ENCODE measurements at regions of chr17 and their contacts with region 1.

Region 1: GRCh38 chr17:27245230-27245696 is 48.7 kb upstream of the WSB1 start:
- DNase-seq: peak; percentile 56
- H3K4me3 ChIP-seq: no peak overlapping the region
- H3K27ac ChIP-seq: peak overlapping the region; percentile 67 to 77
- H3K4me1 ChIP-seq: peaks cover 7% of the 10 kb centered on the region
- H3K27me3 ChIP-seq: no peaks in the 10 kb centered on the region
- CTCF ChIP-seq: peak; percentile 22 to 70 (median 62)
- POLR2A ChIP-seq: no peak

Region 2: GRCh38 chr17:27293898-27294688 is 48.8 kb after region 1 on chr17 and contains the start of gene WSB1:
- intact Hi-C with region 1: loop called (anchors 5 kb)
- DNase-seq: peak; percentile 94
- H3K4me3 ChIP-seq: peak within 1 kb of the TSS; percentile 82 to 96
- H3K27ac ChIP-seq: peak within 1 kb of the TSS; percentile 99 to 100
- H3K4me1 ChIP-seq: no peaks in the 10 kb centered on the region
- H3K27me3 ChIP-seq: no peaks in the 10 kb centered on the region
- CTCF ChIP-seq: peak in 3 of 4 experiments; percentile 4 to 40 (median 17)
- POLR2A ChIP-seq: peak; percentile 99
- total RNA-seq, gene WSB1: 45.7 to 116 TPM

Region 3: DNA sequence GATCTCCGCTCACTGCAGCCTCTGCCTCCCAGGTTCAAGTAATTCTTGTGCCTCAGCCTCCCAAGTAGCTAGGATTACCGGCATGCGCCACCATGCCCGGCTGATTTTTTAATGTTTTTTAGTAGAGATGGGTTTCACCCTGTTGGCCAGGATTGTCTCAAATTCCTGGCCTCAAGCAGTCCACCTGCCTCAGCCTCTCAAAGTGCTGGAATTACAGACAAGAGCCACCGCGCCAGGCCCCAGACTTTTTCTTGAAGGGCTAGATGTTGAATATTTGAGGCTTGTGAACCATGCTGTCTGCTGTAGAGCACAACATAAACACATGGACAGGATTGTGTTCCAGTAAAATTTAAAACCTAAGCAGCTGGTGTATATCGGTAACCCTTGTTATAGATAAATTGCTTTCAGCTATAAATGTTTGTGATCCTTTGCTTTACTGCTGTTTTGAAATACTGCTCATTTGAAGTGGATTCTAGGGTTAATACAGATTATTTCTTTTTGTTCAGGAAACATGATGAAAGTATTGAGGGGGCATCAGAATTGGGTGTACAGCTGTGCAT is 61.1 kb after region 1 on chr17:
- intact Hi-C with region 1: no loop called
- DNase-seq: no peak
- H3K4me3 ChIP-seq: no peak overlapping the region
- H3K27ac ChIP-seq: no peak overlapping the region
- H3K4me1 ChIP-seq: no peaks in the 10 kb centered on the region
- H3K27me3 ChIP-seq: no peaks in the 10 kb centered on the region
- CTCF ChIP-seq: no peak
- POLR2A ChIP-seq: no peak

Region 4: DNA sequence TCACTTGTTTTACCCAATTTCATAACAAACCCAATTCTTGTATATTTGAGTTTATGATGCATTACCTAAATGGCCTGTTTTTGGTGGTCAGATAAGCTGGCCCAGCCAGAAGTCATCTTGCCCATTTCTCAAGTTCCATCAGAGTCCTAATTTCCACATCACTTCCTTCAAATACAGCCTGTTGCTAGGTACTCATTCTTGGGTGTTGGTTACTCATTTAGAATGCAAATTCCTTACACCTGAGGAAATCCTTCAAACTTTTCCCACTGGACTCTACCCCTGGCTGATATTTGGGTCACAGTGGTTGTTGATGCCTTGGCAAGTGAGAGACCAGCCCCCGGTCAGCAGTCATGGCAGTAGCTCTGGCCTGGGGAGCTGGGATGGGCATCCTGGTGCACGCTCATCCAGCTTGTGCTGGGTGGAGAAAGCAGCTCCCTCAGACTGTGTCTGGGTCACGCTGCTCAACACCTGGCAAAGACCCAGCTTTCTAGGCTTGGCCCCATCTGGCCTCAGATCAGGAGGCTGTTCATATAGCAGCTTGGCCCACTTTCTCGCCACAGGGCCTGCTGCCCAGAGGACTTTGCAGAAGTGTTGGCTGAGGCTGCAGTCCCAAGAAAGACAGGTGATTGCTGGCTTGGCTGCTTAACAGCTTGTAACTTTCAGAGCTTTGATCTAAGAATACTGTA is 74.4 kb after region 1 on chr17:
- intact Hi-C with region 1: loop called (anchors 5 kb)
- DNase-seq: peak; percentile 58
- H3K4me3 ChIP-seq: no peak overlapping the region
- H3K27ac ChIP-seq: peak overlapping the region; percentile 5 to 29
- H3K4me1 ChIP-seq: peaks cover 6% of the 10 kb centered on the region
- H3K27me3 ChIP-seq: no peaks in the 10 kb centered on the region
- CTCF ChIP-seq: no peak
- POLR2A ChIP-seq: no peak

Region 5: GRCh38 chr17:27332485-27333409 is 87.5 kb after region 1 on chr17:
- intact Hi-C with region 1: loop called (anchors 1 kb)
- DNase-seq: peak; percentile 95
- H3K4me3 ChIP-seq: peak overlapping the region; percentile 28 to 39
- H3K27ac ChIP-seq: peak overlapping the region; percentile 82 to 86
- H3K4me1 ChIP-seq: peaks cover 3% of the 10 kb centered on the region
- H3K27me3 ChIP-seq: no peaks in the 10 kb centered on the region
- CTCF ChIP-seq: peak; percentile 69 to 97 (median 94)
- POLR2A ChIP-seq: no peak

Region 6: GRCh38 chr17:27455914-27456680 is 210.8 kb after region 1 on chr17 and contains the start of gene KSR1:
- intact Hi-C with region 1: loop called (anchors 5 kb)
- DNase-seq: peak; percentile 75
- H3K4me3 ChIP-seq: peak within 1 kb of the TSS; percentile 63 to 70
- H3K27ac ChIP-seq: peak within 1 kb of the TSS; percentile 74 to 80
- H3K4me1 ChIP-seq: peaks cover 2% of the 10 kb centered on the region
- H3K27me3 ChIP-seq: no peaks in the 10 kb centered on the region
- CTCF ChIP-seq: peak in 3 of 4 experiments; percentile 24 to 44 (median 30)
- POLR2A ChIP-seq: peak; percentile 75
- total RNA-seq, gene KSR1: 11.5 to 23.7 TPM